Activated naive CD4-positive, alpha-beta T cell treated with anti-CD3 and anti-CD28 coated beads for 36 hours (primary cell): ENCODE measurements at regions of chrX and their contacts with region 1.

Region 1: GRCh38 chrX:129606918-129607317 is 47.8 kb downstream of the APLN start:
- DNase-seq: peak; percentile 68
- H3K4me3 Mint-ChIP-seq: no peak overlapping the region
- H3K27ac Mint-ChIP-seq: no peak overlapping the region
- H3K4me1 Mint-ChIP-seq: peaks cover 14% of the 10 kb centered on the region
- H3K27me3 Mint-ChIP-seq: no peaks in the 10 kb centered on the region

Region 2: DNA sequence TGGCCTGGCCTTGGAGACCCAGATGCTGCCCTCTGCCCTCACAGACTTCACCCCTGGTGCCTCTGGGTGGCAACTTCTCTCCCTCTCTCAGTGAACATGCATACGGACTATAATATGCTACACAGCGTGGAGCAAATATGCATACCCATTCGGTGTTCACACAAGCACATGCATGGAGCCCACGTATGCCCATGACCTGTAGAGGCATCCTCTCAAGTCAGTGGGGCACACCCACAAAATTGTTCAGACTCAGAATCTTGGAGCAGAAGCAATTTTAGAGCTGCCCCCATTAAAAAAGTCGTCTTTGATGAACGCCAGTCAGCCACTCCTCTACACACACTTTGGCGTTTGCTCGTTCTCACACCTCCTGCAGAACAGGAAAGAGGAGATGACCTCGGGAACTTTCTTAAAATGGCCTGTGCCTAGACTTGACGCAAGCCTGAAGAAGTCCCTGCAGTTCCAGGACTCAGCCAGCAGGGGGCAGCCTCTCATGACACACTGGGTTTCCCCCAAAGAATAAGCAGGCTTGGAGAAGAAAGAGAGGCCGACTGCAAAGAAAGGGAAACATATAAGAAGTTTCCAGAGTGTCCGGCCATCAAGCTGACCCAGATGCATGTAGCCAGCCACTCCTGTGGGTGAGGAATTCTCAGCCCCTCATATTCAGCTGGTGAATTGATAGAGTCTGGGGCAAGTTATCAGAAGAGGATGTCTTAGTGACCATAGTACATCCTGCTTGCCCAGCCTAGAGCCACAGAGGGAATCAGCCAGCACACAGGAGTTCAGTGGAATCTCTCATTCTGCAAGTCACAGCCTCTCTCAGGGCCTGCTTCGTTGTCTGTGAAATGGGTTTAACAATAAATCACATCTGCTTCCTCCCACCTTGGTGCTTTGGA is 30.5 kb after region 1 on chrX:
- CTCF ChIA-PET with region 1: interaction called, 4 read pairs
- intact Hi-C with region 1: loop called (anchors 1 kb)
- DNase-seq: peak; percentile 86
- H3K4me3 Mint-ChIP-seq: no peak overlapping the region
- H3K27ac Mint-ChIP-seq: no peak overlapping the region
- H3K4me1 Mint-ChIP-seq: peaks cover 1% of the 10 kb centered on the region
- H3K27me3 Mint-ChIP-seq: no peaks in the 10 kb centered on the region

Region 3: DNA sequence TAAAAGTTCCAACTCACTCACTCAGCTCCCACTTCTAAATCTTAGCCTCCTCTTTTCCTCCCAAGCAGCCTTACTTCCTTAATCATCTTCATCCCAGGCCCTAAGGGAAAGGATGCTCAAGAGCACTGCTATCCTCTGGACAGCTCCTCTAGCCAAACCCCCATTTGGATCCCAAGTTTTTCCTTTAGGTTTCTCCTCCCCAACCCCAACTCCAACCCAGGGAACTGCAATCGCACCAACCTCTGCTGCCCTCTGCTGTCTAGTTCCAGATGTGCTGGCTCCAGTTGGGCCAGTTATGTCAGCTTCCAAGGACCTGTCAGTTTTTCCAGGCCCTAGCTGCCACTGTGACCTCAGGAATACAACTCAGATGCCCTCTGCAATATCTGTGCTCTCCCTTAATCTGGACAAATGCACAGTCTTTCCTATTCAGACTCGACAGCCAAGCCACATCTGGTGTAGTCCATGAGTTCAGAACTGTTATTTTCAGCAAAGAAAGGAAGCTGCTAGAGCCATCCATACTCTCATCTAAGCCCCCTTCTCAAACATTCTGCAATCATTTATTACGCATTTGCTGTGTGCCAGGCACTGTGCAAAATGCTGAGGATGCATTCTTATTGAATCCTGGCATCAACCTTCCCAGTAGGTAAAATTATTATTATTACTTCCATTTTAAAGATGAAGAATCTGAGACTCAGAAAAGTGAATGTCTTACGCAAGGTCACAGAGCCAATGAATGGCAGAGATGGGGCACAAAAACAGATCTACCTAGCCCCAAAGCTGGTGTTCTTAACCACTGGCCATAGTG is 119.6 kb after region 1 on chrX:
- CTCF ChIA-PET with region 1: interaction called, 9 read pairs
- intact Hi-C with region 1: loop called (anchors 1 kb)
- DNase-seq: peak; percentile 52
- H3K4me3 Mint-ChIP-seq: no peak overlapping the region
- H3K27ac Mint-ChIP-seq: no peak overlapping the region
- H3K4me1 Mint-ChIP-seq: peaks cover 36% of the 10 kb centered on the region
- H3K27me3 Mint-ChIP-seq: no peaks in the 10 kb centered on the region

Region 4: DNA sequence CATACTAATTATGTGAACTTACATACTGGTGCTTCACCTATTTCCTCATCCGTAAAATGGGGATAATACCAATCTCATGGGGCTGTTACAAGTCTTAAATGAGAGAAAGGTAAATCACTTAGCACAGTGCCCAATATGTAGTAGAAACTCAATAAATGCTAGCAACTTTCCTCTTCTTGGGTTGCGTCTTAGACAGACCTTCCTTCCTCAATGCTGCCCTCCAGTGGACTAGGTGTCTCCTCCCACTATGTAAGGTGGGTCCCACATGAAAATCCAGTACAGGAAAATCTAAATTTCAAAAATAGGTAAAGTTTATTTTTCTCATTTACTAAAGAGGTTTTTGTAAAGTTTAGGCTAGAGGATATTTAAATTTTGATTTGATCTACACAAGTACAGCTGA is 216.2 kb after region 1 on chrX:
- CTCF ChIA-PET with region 1: interaction called, 5 read pairs
- intact Hi-C with region 1: loop called (anchors 2 kb)
- DNase-seq: peak; percentile 73
- H3K4me3 Mint-ChIP-seq: no peak overlapping the region
- H3K27ac Mint-ChIP-seq: no peak overlapping the region
- H3K4me1 Mint-ChIP-seq: peaks cover 13% of the 10 kb centered on the region
- H3K27me3 Mint-ChIP-seq: no peaks in the 10 kb centered on the region

Region 5: DNA sequence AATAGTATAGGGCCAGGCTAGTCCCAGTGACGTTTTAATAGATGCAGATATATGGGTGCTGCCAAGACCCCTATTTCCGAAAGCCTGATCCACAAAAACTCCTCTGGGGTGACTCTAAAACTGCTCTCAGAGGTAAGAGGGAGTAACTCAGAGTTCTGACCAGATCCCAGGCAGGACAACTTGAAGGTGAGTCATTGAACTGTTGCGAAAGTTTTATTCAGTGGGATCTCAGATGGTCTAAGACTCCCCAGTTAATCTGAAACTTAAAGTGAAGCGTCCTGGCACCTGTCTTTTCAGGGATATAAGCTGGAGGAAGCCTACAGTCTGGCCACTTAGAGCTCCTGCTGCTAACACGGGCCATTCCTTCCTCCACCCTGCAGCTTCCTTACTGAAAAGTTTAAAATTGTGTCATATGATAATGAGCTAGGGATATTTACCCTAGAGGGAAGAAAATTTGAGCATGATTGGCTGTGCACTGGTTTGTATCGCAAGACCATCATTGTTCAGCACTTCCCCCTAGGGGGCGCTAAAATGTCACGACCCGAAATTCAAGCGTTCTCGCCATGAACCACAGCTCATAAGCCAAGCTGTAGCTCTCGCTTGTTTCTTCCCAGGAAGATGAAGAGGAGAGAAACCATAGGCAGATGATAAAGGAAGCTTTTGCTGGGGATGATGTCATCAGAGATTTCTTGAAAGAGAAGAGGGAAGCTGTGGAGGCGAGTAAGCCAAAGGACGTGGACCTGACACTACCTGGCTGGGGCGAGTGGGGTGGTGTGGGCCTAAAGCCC is 318.6 kb after region 1 on chrX:
- CTCF ChIA-PET with region 1: interaction called, 3 read pairs
- intact Hi-C with region 1: loop called (anchors 5 kb)
- DNase-seq: peak; percentile 81
- H3K4me3 Mint-ChIP-seq: no peak overlapping the region
- H3K27ac Mint-ChIP-seq: no peak overlapping the region
- H3K4me1 Mint-ChIP-seq: peaks cover 3% of the 10 kb centered on the region
- H3K27me3 Mint-ChIP-seq: no peaks in the 10 kb centered on the region

Region 6: DNA sequence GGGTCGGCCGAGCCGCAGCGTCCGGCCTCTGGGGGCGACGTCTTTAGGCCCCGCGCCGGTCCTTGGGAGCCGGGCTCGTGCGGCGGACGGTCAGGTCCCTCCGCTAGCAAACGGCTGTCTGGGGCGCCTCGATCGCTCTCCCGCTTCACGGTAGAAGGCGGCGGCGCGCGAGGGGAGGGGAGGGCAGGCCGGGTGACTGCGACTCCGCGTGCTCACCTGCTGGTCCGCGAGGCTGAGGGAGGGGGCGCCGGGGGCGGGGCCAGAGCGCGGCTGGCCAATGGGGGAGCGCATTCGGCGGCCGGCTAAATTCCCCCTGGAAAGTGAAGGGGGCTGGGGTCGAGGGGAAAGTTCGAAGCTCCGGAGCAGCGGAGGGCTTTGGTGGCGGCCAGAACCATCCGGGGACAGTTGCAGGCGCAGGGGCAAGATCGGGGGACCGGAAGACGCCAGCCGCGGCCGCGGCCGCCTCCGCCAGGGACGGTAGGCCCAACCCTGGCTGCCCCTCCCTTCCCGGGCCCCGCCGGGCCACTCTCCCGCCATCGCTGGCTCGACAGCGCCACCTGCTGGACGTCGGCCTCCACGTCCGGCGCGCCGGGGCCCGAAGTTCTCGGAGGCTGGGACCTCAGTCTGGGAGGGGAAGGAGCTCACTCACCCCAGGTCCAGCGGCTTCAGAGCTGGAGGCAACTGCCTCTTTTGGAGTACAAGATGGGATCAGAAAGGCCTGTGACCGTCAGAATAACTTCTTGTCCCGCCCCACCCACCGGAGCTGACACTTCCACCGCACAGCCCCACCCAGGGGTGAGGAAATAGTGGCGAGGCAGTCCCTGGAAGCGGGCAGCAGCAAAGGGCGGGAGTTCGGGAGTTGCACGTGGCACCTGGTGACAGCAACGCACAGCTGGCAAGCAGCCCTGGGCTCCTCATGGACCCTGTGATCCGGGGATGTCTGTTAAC is 453.5 kb after region 1 on chrX:
- CTCF ChIA-PET with region 1: interaction called, 20 read pairs
- intact Hi-C with region 1: loop called (anchors 1 kb)
- DNase-seq: peak; percentile 83
- H3K4me3 Mint-ChIP-seq: peak overlapping the region; percentile 71
- H3K27ac Mint-ChIP-seq: no peak overlapping the region
- H3K4me1 Mint-ChIP-seq: no peaks in the 10 kb centered on the region
- H3K27me3 Mint-ChIP-seq: no peaks in the 10 kb centered on the region